ENCODE measurements at regions of chr10 and their contacts with region 1.

Region 1: DNA sequence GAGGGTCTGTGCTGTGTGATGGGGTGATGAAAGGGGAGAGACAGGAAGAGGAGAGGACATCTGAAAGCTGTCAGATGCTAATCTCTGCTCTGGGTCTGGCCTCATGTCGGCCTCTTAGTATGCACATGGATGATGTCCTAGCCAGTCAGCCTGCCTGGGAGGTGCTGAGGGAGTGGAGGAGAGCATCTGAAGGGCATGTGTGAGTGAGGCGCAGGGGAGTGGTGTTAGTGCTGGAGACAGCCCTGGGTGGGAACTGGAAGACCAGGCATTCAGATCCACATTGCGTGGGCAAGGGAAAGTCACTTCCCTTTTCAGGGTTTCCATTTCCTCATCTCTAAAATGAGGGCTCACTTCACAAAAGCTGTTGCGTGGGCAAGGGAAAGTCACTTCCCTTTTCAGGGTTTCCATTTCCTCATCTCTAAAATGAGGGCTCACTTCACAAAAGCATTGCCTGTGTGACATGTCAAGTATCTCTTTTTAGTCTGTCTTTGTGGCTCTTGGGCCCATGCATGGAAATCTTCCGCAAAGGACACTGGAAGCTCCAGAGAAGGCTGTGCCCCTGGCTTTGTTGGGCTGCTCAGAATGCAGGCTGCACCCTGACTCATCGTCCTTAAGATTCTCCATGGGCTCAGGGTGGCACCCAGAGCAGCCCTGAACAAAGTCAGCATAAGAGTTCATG is 10.0 kb downstream of the SFTPD start:
- DNase-seq: peak; percentile 65
- ATAC-seq: peak; percentile 63

Region 2: GRCh38 chr10:79562135-79562756 is 376.6 kb before region 1 on chr10:
- intact Hi-C with region 1: loop called (anchors 10 kb)
- DNase-seq: peak; percentile 80
- ATAC-seq: peak; percentile 92

Region 3: GRCh38 chr10:80046629-80047441 is 108.0 kb after region 1 on chr10:
- intact Hi-C with region 1: no loop called
- DNase-seq: peak; percentile 83
- ATAC-seq: peak; percentile 95

Measured in Right ventricle myocardium superior (tissue), 1 donor.